Lower leg skin (tissue), 4 donors: ENCODE measurements at regions of chr19 and their contacts with region 1.

Region 1: DNA sequence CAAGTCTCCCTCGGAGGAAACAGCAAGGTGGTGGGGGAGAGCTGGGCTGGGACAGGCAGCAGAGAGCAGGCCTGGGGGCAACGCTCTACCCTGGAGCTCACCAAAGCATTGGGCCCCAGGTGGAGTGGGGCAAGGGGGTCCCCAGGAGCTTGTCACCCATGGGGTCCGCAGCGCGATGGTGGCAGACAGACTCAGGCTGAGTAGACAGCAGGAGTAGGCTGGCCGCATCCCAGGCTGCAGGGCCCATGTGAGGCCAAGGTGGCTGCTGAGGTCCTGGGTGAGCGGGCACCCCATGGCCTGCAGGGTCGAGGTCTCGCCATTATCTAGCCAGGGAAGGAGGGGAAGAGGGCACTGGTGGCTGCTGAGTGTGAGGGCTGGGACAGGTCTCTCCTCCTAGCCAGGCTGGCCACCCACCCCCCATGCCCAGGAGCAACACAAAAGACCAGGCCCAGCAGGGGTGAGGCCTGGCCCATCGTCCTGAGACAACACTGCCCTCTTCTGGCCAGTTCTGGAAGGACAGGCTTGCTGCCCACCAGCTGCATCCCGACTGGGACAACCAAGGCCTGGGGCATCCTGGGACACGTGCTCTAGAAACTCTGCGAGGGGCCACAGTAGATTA is 33.1 kb downstream of the CEBPG start:
- DNase-seq: peak; percentile 71 to 95
- H3K4me3 ChIP-seq: no peak overlapping the region
- CTCF ChIP-seq: peak in 1 of 3 donors; percentile 93
- POLR2A ChIP-seq: no peak

Region 2: DNA sequence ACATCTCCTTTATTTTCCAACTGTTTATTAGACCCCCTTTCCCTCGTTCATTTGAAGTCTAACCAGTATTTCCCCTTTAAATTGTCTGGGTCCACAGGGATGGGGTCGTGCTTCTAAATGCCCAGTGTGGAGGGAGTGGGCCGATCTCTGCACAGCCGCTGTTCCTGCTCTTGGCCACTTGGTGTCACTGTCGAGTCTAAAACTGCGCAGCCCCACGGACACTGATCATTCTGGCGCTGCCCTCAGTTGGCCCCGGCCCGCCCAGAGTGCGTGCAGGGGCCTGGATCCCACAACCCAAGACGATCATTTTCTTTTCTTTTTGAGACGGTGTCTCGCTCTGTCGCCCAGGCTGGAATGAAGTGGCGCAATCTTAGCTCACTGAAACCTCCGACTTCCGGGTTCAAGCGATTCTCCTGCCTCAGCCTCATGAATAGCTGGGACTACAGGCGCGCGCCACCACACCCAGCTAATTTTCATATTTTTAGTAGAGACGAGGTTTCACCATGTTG is 262.7 kb before region 1 on chr19:
- intact Hi-C with region 1: no loop called
- DNase-seq: peak; percentile 50 to 93
- H3K4me3 ChIP-seq: no peak overlapping the region
- CTCF ChIP-seq: peak in 1 of 3 donors; percentile 64
- POLR2A ChIP-seq: no peak

Region 3: GRCh38 chr19:33241530-33242101 is 165.0 kb before region 1 on chr19:
- intact Hi-C with region 1: loop called (anchors 2 kb)
- DNase-seq: no peak
- H3K4me3 ChIP-seq: no peak overlapping the region
- CTCF ChIP-seq: peak in 1 of 3 donors; percentile 61
- POLR2A ChIP-seq: no peak

Region 4: DNA sequence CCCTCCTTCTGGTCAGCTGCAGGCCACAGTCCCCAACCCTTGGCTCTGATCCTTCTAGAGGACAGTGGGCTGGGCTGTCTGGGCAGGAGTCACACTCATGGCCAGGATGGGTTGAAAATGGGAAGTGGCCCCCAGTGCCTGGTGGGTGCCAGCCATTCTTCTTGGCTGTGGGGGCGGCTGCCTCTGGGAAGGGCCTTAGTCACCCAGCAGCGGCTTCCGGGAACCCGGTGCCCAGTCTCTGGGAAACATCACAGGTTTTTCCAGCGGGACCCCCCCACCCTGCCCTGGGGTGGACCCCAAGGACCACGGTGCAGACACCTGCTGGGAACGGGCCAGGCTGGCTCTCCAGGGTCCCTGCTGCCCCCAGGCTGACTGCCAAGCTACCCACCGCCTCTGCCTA is 153.7 kb before region 1 on chr19:
- intact Hi-C with region 1: no loop called
- DNase-seq: no peak
- H3K4me3 ChIP-seq: no peak overlapping the region
- CTCF ChIP-seq: no peak
- POLR2A ChIP-seq: no peak

Region 5: GRCh38 chr19:33430674-33431277 is 24.1 kb after region 1 on chr19:
- intact Hi-C with region 1: no loop called
- DNase-seq: peak; percentile 55 to 93
- H3K4me3 ChIP-seq: no peak overlapping the region
- CTCF ChIP-seq: no peak
- POLR2A ChIP-seq: no peak

Region 6: GRCh38 chr19:34120846-34121639 is 714.4 kb after region 1 on chr19:
- intact Hi-C with region 1: no loop called
- DNase-seq: no peak
- H3K4me3 ChIP-seq: no peak overlapping the region
- CTCF ChIP-seq: no peak
- POLR2A ChIP-seq: no peak